GM12878 (cell line): ENCODE measurements at regions of chr20 and their contacts with region 1.

Region 1: DNA sequence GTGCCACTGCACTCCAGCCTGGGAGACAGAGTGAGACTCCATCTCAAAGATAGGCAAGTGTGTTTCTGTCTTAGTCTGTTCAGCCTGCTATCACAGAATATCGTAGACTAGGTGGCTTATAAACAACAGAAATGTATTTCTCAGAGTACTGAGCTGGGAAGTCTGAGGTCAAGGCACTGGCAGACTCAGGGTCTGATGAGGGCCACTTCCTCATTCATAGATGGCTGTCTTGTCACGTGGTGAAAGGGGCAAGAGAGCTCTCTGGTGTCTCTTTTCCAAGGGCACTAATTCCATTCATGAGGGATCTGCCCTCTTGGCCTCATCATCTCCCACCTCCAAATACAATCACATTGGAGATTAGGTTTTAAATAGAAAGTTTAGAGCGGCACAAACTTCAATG is 95.6 kb upstream of the PHACTR3 start:
- DNase-seq: no peak
- ATAC-seq: no peak
- H3K4me3 ChIP-seq: no peak overlapping the region
- H3K27ac ChIP-seq: no peak overlapping the region
- H3K4me1 ChIP-seq: no peaks in the 10 kb centered on the region
- H3K27me3 ChIP-seq: no peaks in the 10 kb centered on the region; a peak in 1 of 4 replicates
- CTCF ChIP-seq: no peak
- EP300 ChIP-seq: no peak
- POLR2A ChIP-seq: no peak
- RAD21 ChIP-seq: no peak

Region 2: GRCh38 chr20:59455402-59456341 is 53.1 kb before region 1 on chr20:
- CTCF ChIA-PET with region 1: no interaction called
- POLR2A ChIA-PET with region 1: no interaction called
- RAD21 ChIA-PET with region 1: no interaction called
- SMC1A ChIA-PET with region 1: no interaction called
- in situ Hi-C with region 1: no loop called
- intact Hi-C with region 1: no loop called
- DNase-seq: no peak
- ATAC-seq: no peak
- H3K4me3 ChIP-seq: no peak overlapping the region
- H3K27ac ChIP-seq: no peak overlapping the region
- H3K4me1 ChIP-seq: no peaks in the 10 kb centered on the region
- H3K27me3 ChIP-seq: peaks cover 0 to 3% of the 10 kb centered on the region in 2 experiments; a peak in 2 of 4 replicates
- CTCF ChIP-seq: peak; percentile 42 to 48 (median 44); a peak in 5 of 6 replicates
- EP300 ChIP-seq: no peak
- POLR2A ChIP-seq: no peak
- RAD21 ChIP-seq: peak; percentile 57

Region 3: DNA sequence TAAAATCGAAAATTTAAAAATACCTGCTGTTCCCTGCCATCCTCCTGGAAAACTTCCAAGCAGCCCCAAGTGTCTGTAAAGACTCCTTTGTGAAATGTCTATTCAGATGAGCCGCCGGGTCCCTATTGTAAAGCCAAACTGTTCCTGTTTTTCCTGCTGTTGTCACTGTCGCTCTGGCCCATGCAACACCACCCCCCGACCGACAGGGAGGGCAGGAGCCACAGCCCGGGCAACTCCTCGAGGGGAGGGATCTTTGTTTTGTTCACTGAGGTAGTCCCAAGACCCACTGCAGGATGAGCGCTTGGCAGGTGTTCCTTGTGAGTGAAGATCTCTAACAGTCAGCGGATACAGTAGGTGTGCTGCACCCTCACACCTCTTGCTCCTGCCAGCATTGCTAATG is 36.7 kb before region 1 on chr20:
- CTCF ChIA-PET with region 1: no interaction called
- POLR2A ChIA-PET with region 1: no interaction called
- RAD21 ChIA-PET with region 1: no interaction called
- SMC1A ChIA-PET with region 1: no interaction called
- in situ Hi-C with region 1: no loop called
- intact Hi-C with region 1: no loop called
- DNase-seq: no peak
- ATAC-seq: no peak
- H3K4me3 ChIP-seq: no peak overlapping the region
- H3K27ac ChIP-seq: no peak overlapping the region
- H3K4me1 ChIP-seq: no peaks in the 10 kb centered on the region
- H3K27me3 ChIP-seq: peaks cover 3 to 4% of the 10 kb centered on the region in 2 experiments; a peak in 2 of 4 replicates
- CTCF ChIP-seq: no peak
- EP300 ChIP-seq: no peak
- POLR2A ChIP-seq: no peak
- RAD21 ChIP-seq: no peak

Region 4: GRCh38 chr20:59495894-59496510 is 12.7 kb before region 1 on chr20:
- CTCF ChIA-PET with region 1: interaction called, 13 read pairs
- POLR2A ChIA-PET with region 1: no interaction called
- RAD21 ChIA-PET with region 1: no interaction called
- SMC1A ChIA-PET with region 1: no interaction called
- in situ Hi-C with region 1: no loop called
- intact Hi-C with region 1: no loop called
- DNase-seq: no peak
- ATAC-seq: peak; percentile 86
- H3K4me3 ChIP-seq: no peak overlapping the region
- H3K27ac ChIP-seq: no peak overlapping the region
- H3K4me1 ChIP-seq: no peaks in the 10 kb centered on the region
- H3K27me3 ChIP-seq: peaks cover 0 to 2% of the 10 kb centered on the region in 2 experiments; a peak in 1 of 4 replicates
- CTCF ChIP-seq: peak; percentile 82 to 93 (median 90)
- EP300 ChIP-seq: no peak
- POLR2A ChIP-seq: no peak
- RAD21 ChIP-seq: peak; percentile 54